AG04450 (cell line): ENCODE measurements at regions of chr15 and their contacts with region 1.

Region 1: DNA sequence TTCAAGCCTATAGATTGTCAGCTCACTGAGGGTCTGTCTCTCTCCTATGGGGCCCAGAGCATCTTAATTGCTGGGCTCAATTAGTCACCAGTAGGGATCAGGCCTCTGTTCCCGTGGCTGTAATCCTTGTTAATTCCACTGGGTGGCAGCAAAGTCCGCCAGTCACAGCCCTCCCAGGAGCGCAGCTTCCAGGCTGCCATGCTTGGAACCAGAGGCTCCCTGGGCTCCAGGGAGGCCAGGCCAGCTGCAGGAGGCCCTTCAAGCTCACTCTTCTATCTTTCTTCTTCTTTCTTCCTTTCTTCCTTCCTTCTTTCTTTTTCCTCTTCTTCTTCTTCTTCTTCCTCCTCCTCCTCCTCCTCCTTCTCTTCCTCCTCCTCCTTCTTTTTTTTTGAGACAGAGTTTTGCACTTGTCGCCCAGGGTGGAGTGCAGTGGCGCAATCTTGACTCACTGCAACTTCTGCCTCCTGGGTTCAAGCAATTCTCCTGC is 14.4 kb downstream of the RNU5B-1 start:
- DNase-seq: no peak
- H3K4me3 ChIP-seq: no peak overlapping the region
- H3K27ac ChIP-seq: no peak overlapping the region
- H3K27me3 ChIP-seq: peaks cover 9% of the 10 kb centered on the region
- CTCF ChIP-seq: peak; percentile 86

Region 2: GRCh38 chr15:65395567-65396185 is 76.8 kb after region 1 on chr15:
- CTCF ChIA-PET with region 1: interaction called, 56 read pairs
- POLR2A ChIA-PET with region 1: no interaction called
- DNase-seq: no peak
- H3K4me3 ChIP-seq: no peak overlapping the region
- H3K27ac ChIP-seq: no peak overlapping the region
- H3K27me3 ChIP-seq: peaks cover 37% of the 10 kb centered on the region
- CTCF ChIP-seq: no peak

Region 3: DNA sequence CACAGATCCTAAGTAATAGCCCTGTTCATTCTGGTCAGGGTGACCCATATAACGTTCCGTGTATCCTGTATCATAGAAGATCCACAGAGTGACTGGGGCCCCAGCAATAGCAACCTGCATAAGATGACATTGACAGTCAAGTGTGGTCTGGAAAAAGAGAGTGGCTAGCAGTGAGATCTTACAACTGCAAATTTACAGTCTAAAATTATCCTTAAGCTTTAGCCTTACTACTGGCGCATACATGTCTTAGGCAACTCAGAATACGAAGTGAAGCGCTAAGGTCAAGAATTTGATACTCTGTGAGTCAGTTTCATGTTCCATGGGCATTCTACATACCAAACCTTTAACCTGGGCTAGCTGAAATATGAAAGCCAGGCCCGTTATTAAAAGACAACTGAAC is 133.1 kb after region 1 on chr15:
- CTCF ChIA-PET with region 1: no interaction called
- POLR2A ChIA-PET with region 1: no interaction called
- DNase-seq: no peak
- H3K4me3 ChIP-seq: no peak overlapping the region
- H3K27ac ChIP-seq: no peak overlapping the region
- H3K27me3 ChIP-seq: no peaks in the 10 kb centered on the region
- CTCF ChIP-seq: no peak